Activated naive CD4-positive, alpha-beta T cell treated with anti-CD3 and anti-CD28 coated beads for 36 hours (primary cell): ENCODE measurements at regions of chr9 and their contacts with region 1.

Region 1: DNA sequence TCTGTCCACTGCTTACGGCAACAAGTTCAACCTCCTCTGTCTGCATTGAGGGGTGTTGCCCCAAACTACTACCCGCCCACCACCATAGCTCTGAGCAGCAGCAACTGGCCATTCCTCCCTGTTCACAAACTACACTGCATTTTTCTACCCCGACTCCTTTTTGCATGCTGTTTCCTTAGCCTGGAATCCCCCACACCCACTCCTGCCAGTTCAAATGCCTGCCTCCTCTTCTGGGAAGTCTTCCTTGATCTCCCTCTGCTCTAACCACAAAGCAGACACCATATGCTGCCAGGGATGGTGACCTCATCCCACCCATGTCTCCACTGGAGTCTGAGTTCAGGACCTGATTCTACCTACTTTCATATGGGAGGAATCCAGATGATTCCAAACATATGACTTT is 13.3 kb downstream of the ALDH1B1 start:
- DNase-seq: no peak
- H3K4me3 Mint-ChIP-seq: no peak overlapping the region
- H3K27ac Mint-ChIP-seq: no peak overlapping the region
- H3K4me1 Mint-ChIP-seq: no peaks in the 10 kb centered on the region
- H3K27me3 Mint-ChIP-seq: peaks cover 3% of the 10 kb centered on the region

Region 2: DNA sequence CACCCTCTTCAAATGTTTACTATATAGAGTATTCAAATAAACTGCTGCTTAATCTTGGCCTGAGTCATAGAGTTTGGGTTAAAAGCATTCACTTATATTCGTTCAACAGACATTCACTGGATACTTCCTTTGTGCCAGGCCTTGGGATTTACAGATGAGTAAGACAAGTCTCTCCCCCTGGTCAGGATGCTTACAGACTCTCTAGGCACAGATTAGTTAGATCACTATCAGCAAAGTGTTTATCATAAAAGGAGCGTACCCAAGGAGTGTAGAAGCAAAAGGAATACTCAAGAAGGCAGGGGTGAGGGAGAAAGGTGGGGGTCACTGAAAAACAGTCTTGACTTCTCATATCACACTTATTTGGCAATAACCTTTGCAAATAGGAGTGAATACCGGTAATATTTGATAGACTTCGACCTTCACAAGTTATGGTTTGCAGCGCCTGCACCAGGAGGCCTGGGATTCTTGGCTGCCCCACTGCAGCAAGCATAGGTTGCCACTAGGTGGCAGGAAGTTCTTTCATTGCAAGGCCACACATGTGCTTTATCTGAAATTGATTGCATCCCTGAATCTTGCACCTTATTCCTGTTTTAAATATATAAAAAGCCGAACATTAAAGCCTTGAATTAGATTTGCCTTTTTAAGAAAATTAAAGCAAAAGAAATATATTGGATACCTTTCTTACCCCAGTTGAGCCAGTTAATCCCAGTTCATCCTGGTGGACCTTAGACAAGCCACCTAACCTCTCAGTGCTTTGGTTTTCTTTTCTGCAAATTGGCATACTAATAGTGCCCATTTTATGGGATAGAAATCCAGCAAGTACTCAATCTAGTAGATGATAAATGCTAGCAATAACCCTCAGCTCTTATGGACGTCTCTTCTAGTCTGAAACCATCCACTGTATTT is 658.7 kb before region 1 on chr9:
- CTCF ChIA-PET with region 1: no interaction called
- intact Hi-C with region 1: loop called (anchors 5 kb)
- DNase-seq: peak; percentile 80
- H3K4me3 Mint-ChIP-seq: no peak overlapping the region
- H3K27ac Mint-ChIP-seq: no peak overlapping the region
- H3K4me1 Mint-ChIP-seq: no peaks in the 10 kb centered on the region
- H3K27me3 Mint-ChIP-seq: no peaks in the 10 kb centered on the region

Region 3: GRCh38 chr9:38371495-38371894 is 34.3 kb before region 1 on chr9:
- CTCF ChIA-PET with region 1: no interaction called
- intact Hi-C with region 1: loop called (anchors 1 kb)
- DNase-seq: peak; percentile 50
- H3K4me3 Mint-ChIP-seq: no peak overlapping the region
- H3K27ac Mint-ChIP-seq: no peak overlapping the region
- H3K4me1 Mint-ChIP-seq: no peaks in the 10 kb centered on the region
- H3K27me3 Mint-ChIP-seq: no peaks in the 10 kb centered on the region

Region 4: GRCh38 chr9:38382141-38382540 is 23.6 kb before region 1 on chr9:
- CTCF ChIA-PET with region 1: no interaction called
- intact Hi-C with region 1: no loop called
- DNase-seq: no peak
- H3K4me3 Mint-ChIP-seq: no peak overlapping the region
- H3K27ac Mint-ChIP-seq: no peak overlapping the region
- H3K4me1 Mint-ChIP-seq: no peaks in the 10 kb centered on the region
- H3K27me3 Mint-ChIP-seq: peaks cover 2% of the 10 kb centered on the region